Endothelial cell of umbilical vein (primary cell): ENCODE measurements at regions of chr18 and their contacts with region 1.

Region 1: DNA sequence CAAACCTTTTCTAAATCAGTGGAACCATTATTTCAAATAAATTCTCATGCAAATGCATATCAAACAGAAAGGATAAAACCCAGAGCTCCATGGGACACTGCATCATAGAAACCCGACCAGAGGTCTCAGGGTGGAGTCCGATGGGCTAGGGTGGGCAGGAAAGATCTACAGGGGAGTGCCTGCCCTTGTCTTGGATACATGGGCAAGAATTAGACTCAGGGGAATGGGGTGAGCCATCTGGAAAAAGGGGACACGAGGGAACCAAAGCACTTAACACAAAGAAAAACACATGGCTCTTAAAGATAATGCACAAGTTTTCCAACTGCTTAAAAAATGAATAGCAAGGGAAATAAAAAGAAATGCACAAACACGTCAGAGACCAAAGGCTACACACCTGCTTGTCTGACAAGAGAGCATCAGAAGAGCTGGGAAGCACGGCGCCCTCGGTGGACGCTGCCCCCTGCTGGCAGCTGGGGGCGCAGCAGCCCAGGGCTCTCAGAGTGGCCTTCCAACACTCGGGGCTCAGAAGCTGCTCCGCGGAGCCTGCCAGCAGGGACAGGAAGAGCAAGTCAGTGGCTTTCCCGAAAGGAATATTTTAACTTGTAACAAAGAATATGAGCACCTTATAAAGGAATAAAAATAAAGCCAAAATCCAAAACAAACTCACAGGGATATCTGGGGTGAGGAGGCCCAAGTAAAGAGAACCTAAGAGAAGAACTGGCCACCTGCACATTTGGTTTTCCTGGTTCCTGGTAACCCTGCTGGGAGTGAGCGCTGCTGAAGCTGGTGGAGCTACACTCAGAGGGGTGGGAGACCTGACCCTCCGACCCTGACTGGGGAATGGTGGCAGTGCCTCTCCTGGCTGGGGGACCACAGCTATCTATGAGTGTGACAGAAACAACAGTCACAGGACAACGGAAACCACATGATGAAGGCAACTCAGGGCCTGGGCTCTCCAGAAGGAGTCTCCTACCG is 54.5 kb downstream of the SIGLEC15 start:
- DNase-seq: peak; percentile 75
- H3K4me3 ChIP-seq: no peak overlapping the region
- H3K27ac ChIP-seq: no peak overlapping the region
- H3K4me1 ChIP-seq: no peaks in the 10 kb centered on the region
- H3K27me3 ChIP-seq: no peaks in the 10 kb centered on the region
- CTCF ChIP-seq: peak; percentile 99 to 100
- POLR2A ChIP-seq: no peak

Region 2: DNA sequence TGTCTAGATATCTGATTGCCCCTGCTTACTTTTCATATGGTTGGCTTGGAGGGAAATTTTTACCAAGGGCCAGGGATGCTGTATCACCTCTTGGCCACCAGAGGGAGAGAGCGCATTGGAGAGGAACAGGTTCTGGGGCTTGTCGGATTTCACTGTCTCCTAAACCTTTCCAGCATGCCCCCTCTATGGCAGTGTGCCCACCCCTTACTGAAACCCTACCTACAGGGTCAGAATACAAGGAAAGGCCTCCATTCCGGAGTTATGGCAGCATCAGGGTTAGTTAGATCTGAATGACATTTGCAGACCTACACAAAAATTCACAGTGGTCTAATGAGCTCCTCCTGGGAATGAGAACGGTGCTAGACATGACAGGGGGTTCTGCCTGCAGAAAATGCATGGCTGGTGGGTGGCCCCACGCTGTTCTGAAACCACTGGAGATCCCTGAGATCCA is 258.9 kb before region 1 on chr18:
- CTCF ChIA-PET with region 1: interaction called, 6 read pairs
- POLR2A ChIA-PET with region 1: no interaction called
- dilution Hi-C with region 1: no loop called
- intact Hi-C with region 1: loop called (anchors 2 kb)
- DNase-seq: peak; percentile 41
- H3K4me3 ChIP-seq: no peak overlapping the region
- H3K27ac ChIP-seq: no peak overlapping the region
- H3K4me1 ChIP-seq: no peaks in the 10 kb centered on the region
- H3K27me3 ChIP-seq: peaks cover 2% of the 10 kb centered on the region in 2 experiments
- CTCF ChIP-seq: peak; percentile 81 to 89
- POLR2A ChIP-seq: no peak

Region 3: DNA sequence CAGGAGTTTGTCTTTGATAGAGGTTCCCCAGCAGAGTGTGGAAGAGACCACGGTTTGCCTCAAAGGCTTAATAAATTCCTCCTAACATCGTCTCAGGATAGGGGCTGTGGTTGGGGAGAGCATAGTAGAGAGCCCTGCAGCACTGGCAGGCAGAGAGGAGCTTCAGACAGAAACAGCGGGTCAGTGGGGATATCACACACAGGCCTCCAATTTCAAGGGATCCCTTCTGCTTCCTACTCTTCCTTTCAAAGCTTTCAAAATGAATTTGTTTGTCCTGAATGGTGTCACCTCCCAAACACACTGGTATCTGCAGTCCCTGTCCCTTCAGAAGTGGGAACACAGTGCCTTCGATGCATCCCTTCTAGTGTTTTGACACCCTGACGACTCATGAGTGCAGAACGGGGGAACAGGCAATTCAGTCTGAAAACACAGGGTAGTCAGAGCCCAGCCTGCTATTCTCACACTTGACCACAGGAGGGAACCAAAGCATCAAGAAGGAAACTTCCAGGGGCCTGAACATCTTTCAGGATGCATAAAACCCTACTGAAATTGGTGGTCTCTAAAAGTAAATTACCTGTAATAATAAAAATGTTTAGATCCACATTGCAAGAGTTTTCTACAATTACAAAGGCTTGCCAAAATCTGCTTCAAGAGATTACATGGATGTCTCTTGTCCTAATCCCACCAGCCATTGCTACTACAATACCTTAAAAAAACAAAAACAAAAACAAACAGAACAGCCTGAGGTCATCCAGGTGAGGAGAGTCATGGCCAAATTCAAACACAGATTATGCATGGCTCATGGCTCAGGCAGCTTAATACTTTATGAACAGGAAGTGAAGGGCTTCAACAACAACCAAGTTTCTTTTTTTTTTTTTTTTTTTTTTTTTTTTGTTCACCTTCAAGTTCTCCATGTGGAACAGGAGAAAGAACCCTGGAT is 214.9 kb before region 1 on chr18:
- CTCF ChIA-PET with region 1: interaction called, 69 read pairs
- POLR2A ChIA-PET with region 1: no interaction called
- dilution Hi-C with region 1: no loop called
- intact Hi-C with region 1: loop called (anchors 1 kb)
- DNase-seq: peak; percentile 65
- H3K4me3 ChIP-seq: no peak overlapping the region
- H3K27ac ChIP-seq: no peak overlapping the region
- H3K4me1 ChIP-seq: peaks cover 5% of the 10 kb centered on the region
- H3K27me3 ChIP-seq: no peaks in the 10 kb centered on the region
- CTCF ChIP-seq: peak; percentile 75 to 78
- POLR2A ChIP-seq: no peak

Region 4: GRCh38 chr18:45690975-45691815 is 188.8 kb before region 1 on chr18:
- CTCF ChIA-PET with region 1: interaction called, 108 read pairs
- POLR2A ChIA-PET with region 1: no interaction called
- dilution Hi-C with region 1: no loop called
- intact Hi-C with region 1: loop called (anchors 1 kb)
- DNase-seq: peak; percentile 71
- H3K4me3 ChIP-seq: no peak overlapping the region
- H3K27ac ChIP-seq: no peak overlapping the region
- H3K4me1 ChIP-seq: no peaks in the 10 kb centered on the region
- H3K27me3 ChIP-seq: peaks cover 4% of the 10 kb centered on the region in 2 experiments
- CTCF ChIP-seq: peak; percentile 71 to 85
- POLR2A ChIP-seq: no peak

Region 5: DNA sequence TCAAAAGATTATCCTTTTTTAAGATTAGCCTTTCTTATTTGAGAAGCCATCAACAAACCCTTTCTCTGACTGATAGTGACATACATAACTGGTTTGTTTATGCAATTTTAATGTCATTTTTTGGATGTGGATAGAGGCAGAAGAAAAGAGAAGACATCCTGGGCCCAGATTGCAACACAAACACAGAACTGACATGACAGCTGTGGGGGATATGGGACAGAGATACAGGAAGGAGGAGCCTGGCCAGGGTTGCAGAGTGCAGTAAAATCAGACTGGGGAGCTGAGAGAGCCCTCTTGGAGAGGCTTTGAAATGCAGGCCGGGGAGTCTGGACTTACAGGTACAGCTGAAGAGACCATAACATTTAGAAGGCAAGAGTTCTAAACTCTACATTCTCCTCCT is 10.6 kb after region 1 on chr18:
- CTCF ChIA-PET with region 1: interaction called, 18 read pairs
- POLR2A ChIA-PET with region 1: no interaction called
- dilution Hi-C with region 1: no loop called
- intact Hi-C with region 1: no loop called
- DNase-seq: no peak
- H3K4me3 ChIP-seq: no peak overlapping the region
- H3K27ac ChIP-seq: no peak overlapping the region
- H3K4me1 ChIP-seq: peaks cover 4% of the 10 kb centered on the region
- H3K27me3 ChIP-seq: no peaks in the 10 kb centered on the region
- CTCF ChIP-seq: no peak
- POLR2A ChIP-seq: no peak

Region 6: GRCh38 chr18:45896991-45897390 is 17.0 kb after region 1 on chr18:
- CTCF ChIA-PET with region 1: interaction called, 18 read pairs
- POLR2A ChIA-PET with region 1: no interaction called
- dilution Hi-C with region 1: no loop called
- intact Hi-C with region 1: no loop called
- DNase-seq: no peak
- H3K4me3 ChIP-seq: no peak overlapping the region
- H3K27ac ChIP-seq: no peak overlapping the region
- H3K4me1 ChIP-seq: peaks cover under 1% of the 10 kb centered on the region
- H3K27me3 ChIP-seq: no peaks in the 10 kb centered on the region
- CTCF ChIP-seq: no peak
- POLR2A ChIP-seq: no peak

Region 7: DNA sequence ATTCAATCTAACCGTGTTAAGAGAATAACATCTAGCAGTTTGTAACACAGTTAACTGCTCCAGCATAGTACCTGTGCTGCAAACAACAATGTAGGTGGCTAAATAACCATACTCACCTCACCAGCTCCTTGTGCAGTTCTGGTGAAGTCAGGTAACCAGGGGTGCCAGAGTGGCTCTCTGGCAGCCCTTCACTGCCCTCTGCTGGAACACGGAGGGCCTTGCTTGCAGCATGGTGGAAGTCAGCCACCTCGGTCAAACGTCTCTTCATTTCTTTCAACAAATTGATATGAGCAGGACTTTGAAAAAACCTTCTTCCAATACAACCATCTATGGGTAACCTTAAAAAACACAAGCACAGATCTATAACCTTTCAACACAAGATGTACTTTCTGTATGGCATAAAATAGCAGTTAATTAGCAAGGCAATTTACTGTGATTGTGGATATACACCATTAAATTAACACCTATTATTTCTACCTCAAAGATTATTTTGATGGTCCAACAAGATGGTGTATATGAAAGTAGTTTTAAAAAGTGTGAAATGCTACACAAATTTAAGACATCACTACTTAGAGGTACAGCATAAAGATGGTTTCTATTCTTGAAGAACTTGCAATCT is 30.5 kb after region 1 on chr18:
- CTCF ChIA-PET with region 1: interaction called, 13 read pairs
- POLR2A ChIA-PET with region 1: no interaction called
- dilution Hi-C with region 1: no loop called
- intact Hi-C with region 1: no loop called
- DNase-seq: peak; percentile 61
- H3K4me3 ChIP-seq: no peak overlapping the region
- H3K27ac ChIP-seq: no peak overlapping the region
- H3K4me1 ChIP-seq: no peaks in the 10 kb centered on the region
- H3K27me3 ChIP-seq: no peaks in the 10 kb centered on the region
- CTCF ChIP-seq: peak; percentile 77 to 87
- POLR2A ChIP-seq: no peak

Region 8: DNA sequence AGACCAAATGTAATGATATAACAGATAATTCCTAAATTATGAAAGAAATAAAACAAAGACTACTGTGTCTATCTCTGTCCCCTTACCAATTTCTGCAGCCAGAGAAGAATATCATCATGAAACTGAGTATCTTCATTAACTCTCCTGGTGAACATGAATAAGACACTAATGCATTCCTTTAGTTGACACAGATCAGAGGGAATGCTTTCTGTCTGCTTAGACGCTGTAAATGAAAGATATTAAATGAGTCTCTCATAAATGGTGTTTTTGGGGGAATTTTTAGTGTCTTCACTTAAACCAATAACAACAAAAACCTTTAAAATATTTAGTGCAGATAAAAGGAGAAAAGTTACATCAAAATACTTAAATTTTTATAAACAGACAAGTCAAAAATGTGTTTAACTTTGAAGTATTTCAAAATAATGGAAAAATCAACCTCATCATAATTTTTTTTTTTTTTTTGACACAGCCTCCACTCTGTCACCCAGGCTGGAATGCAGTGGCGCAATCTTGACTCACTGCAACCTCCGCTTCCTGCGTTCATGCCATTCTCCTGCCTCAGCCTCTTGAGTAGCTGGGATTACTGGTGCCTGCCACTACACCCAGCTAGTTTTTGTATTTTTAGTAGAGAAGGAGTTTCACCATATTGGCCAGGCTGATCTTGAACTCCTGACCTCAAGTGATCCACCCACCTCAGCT is 71.2 kb after region 1 on chr18:
- CTCF ChIA-PET with region 1: no interaction called
- POLR2A ChIA-PET with region 1: no interaction called
- dilution Hi-C with region 1: no loop called
- intact Hi-C with region 1: no loop called
- DNase-seq: peak; percentile 24
- H3K4me3 ChIP-seq: no peak overlapping the region
- H3K27ac ChIP-seq: peak overlapping the region; percentile 35
- H3K4me1 ChIP-seq: peaks cover 11% of the 10 kb centered on the region
- H3K27me3 ChIP-seq: no peaks in the 10 kb centered on the region
- CTCF ChIP-seq: no peak
- POLR2A ChIP-seq: no peak